Naive thymus-derived CD4-positive, alpha-beta T cell (primary cell): ENCODE measurements at regions of chr1 and their contacts with region 1.

Region 1: DNA sequence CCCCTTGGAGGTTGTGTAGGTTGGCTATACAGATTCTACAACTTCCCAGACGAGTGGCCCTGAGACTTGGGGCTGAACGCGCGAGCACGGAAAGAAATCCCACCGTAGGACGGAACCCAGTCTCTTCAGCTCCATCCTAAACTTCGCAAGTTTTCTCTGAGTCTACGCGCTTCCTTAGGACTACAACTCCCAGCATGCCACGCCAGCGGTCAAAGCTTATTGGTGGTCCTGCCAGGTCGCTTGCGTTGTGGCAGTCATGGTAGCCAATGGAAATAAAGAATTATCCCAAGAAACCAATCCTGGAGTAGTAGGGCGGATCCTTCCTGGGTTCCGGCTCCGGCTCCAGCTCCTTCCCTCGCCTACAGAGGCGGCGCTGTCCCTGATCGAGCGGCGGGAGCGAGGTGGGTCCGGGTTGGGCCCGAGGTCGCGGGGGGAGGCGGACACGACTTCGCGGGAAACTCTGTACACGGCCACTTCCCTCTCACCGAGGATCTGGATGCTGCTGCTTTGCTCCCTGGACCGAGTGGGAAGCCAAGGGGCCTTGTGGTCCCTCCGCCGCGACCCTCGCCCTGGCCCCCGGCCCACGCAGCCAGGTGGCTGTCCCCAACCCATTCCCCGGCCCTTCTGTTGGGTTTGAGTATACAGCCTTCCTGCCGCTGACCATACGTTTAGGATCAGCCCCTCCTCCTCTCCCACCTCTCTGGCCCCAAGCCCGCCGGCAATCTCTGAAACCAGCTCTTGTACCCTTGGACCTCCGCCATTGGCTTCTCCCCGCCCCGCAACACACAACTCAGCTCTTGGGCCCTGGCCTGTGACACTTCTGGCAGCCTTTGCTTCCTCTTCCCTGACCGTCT is at the start of gene ZNF691:
- DNase-seq: peak; percentile 51 to 91 (median 84)
- ATAC-seq: peak; percentile 99
- H3K4me3 ChIP-seq: peak within 1 kb of the TSS; percentile 97
- H3K4me3 Mint-ChIP-seq: peak within 1 kb of the TSS; percentile 84 to 100 (median 96)
- H3K27ac ChIP-seq: peak within 1 kb of the TSS; percentile 72
- H3K27ac Mint-ChIP-seq: peak within 1 kb of the TSS; percentile 71 to 95 (median 85)
- H3K4me1 ChIP-seq: peaks cover 11 to 22% of the 10 kb centered on the region in 2 donors
- H3K4me1 Mint-ChIP-seq: peaks cover 19 to 38% (median 31%) of the 10 kb centered on the region in 7 donors
- H3K27me3 ChIP-seq: no peaks in the 10 kb centered on the region
- H3K27me3 Mint-ChIP-seq: no peaks in the 10 kb centered on the region
- total RNA-seq, gene ZNF691: 3.5 to 17.2 (median 12.8) TPM

Region 2: DNA sequence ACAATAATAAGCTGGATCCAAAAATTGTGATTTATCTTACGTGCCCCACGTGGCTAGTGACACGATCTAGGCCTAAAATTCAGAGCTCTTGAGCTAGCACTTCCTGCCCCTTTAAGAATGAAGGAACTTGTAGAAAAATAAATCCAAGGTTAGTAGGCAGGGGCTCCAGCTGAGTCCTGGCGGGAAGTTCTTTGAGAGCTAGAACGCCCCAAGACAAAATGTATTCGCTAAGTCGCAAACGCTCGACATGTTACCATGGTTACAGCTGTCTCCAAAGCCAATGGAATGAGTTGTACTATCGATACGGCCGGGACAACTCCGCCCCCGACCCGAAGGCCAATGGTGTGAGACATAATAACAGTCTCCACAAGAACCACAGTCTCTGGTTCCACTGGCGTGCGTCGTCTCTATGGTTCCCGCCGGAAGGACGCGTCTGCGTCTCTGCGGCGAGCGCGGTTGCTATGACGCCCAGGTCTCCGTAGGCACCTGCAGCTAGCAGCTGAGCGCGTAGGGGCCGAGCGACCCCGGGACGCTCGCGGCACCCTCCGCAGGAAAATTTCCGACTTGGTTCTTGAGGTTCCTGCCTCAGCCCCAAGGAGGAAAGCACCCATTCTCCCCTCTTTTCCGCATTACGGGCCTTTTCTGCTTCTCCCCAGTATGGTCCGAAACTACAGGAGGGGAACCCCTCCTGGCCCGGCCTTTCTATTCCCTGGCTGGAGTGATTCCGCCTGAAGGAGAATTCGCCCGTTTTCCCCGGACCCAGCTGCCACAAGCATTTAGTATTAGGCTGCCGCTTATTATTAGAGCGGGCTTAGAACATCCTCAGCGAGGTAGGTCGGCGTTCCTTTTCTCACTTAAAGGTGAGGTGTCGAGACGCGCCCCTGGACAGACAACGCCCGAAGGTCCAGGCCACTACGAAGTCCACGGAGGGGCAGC is 383.4 kb before region 1 on chr1 and contains the start of gene CCDC30:
- CTCF ChIA-PET with region 1: no interaction called
- POLR2A ChIA-PET with region 1: no interaction called
- intact Hi-C with region 1: loop called (anchors 1 to 5 kb)
- DNase-seq: peak; percentile 75 to 99 (median 98)
- ATAC-seq: peak; percentile 99
- H3K4me3 ChIP-seq: peak within 1 kb of the TSS; percentile 50
- H3K4me3 Mint-ChIP-seq: peak within 1 kb of the TSS; percentile 74 to 92 (median 86)
- H3K27ac ChIP-seq: peak within 1 kb of the TSS; percentile 86
- H3K27ac Mint-ChIP-seq: peak within 1 kb of the TSS; percentile 87 to 98 (median 93)
- H3K4me1 ChIP-seq: peaks cover 14 to 18% of the 10 kb centered on the region in 2 donors
- H3K4me1 Mint-ChIP-seq: peaks cover 14 to 57% (median 49%) of the 10 kb centered on the region in 7 donors
- H3K27me3 ChIP-seq: no peaks in the 10 kb centered on the region
- H3K27me3 Mint-ChIP-seq: peaks cover 0 to 20% (median 0%) of the 10 kb centered on the region in 5 donors
- total RNA-seq, gene CCDC30: 2.3 to 5.3 (median 4.2) TPM

Region 3: DNA sequence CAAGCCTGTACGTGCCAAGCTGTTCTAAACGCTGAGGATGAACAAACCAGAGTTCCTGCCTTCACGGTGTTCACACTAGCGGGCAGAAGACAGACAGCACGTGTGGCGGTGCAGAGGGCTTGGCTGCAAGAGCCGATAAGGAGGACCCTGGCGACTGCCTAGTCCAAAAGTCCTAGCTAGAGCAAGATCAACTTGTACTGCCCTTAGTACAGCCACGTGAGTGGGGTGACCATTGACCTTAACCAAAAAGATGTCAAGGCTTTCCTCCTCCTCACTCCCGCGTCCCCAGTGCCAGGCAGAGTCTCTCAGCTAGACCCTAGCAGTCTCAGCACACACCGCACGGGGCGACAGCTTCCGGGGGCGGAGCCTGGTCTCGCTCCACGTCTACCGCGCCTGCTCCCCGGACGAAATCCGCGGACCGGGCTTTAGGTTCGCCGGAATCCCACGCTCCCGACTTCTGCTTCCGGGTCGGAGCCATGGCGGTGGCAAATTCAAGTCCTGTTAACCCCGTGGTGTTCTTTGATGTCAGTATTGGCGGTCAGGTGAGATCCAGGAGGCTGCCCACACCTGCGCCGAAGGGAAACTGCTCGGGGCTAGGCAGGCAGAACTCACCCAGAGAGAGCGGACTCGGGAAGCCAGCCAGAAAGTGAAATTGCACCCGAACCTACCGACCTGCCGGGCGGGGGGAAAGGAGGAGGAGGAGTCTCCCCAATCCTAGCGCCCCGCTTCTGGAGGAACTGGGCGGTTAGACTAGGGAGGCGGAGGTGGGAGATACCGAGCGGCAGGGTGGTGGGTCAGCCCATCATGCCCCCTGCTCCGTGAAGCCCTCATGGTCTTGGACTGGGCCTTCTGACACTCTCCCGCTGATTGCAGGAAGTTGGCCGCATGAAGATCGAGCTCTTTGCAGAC is 188.3 kb before region 1 on chr1 and contains the start of gene PPIH:
- CTCF ChIA-PET with region 1: no interaction called
- POLR2A ChIA-PET with region 1: interaction called, 3 read pairs
- intact Hi-C with region 1: loop called (anchors 1 kb)
- DNase-seq: peak; percentile 82 to 94 (median 92)
- ATAC-seq: peak; percentile 99
- H3K4me3 ChIP-seq: peak within 1 kb of the TSS; percentile 90
- H3K4me3 Mint-ChIP-seq: peak within 1 kb of the TSS; percentile 94 to 99 (median 99)
- H3K27ac ChIP-seq: peak within 1 kb of the TSS; percentile 75
- H3K27ac Mint-ChIP-seq: peak within 1 kb of the TSS; percentile 84 to 98 (median 96)
- H3K4me1 ChIP-seq: peaks cover 17 to 22% of the 10 kb centered on the region in 2 donors
- H3K4me1 Mint-ChIP-seq: peaks cover 20 to 48% (median 44%) of the 10 kb centered on the region in 7 donors
- H3K27me3 ChIP-seq: no peaks in the 10 kb centered on the region
- H3K27me3 Mint-ChIP-seq: peaks cover 0 to 3% (median 0%) of the 10 kb centered on the region in 5 donors
- total RNA-seq, gene PPIH: 28.0 to 76.8 (median 40.7) TPM

Region 4: DNA sequence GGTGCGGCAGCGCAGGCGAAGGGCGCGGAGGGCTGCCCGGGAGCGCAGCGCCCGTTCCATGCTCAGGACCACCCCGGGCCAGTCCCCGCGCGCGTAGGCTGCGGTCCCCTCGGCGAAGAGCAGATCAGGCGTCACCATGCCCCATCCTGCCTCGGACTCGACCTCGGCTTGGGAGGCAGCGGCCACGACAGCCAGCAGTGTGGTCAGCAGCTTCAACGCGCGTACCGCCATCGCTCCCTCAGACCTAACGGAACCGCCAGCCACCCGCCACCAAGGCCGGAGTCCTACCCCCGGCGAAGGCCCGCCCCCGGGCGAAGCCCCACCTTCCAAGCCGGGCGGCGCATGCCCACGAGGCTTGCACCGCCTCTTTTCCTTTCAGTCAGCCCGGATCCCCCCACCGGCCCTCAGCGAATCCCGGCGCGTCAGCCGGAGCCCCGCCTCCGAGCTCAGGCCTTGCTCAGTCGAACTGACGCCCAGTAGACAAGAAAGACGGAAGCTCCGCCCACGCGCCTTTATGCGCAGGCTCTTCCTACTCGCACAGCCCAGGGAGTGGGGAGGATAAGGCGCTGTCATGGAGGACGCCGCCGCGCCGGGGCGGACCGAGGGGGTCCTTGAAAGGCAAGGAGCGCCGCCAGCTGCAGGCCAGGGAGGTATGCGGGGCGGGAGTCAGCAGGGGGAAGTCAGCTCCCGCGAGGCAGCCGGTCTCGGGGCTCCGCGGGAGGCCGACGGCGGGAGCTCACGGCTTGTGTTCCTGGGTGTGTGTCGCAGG is 79.6 kb before region 1 on chr1 and contains the starts of genes C1orf50 and P3H1:
- CTCF ChIA-PET with region 1: interaction called, 3 read pairs
- POLR2A ChIA-PET with region 1: interaction called, 37 read pairs
- intact Hi-C with region 1: loop called (anchors 1 kb)
- DNase-seq: peak; percentile 98 to 100 (median 100)
- ATAC-seq: peak; percentile 96
- H3K4me3 ChIP-seq: peak within 1 kb of the TSS; percentile 91
- H3K4me3 Mint-ChIP-seq: peak within 1 kb of the TSS in 1 of 10 donors; percentile 92
- H3K27ac ChIP-seq: peak within 1 kb of the TSS; percentile 84
- H3K27ac Mint-ChIP-seq: peak within 1 kb of the TSS in 8 of 9 donors; percentile 70 to 96 (median 92)
- H3K4me1 ChIP-seq: peaks cover 25 to 35% of the 10 kb centered on the region in 2 donors
- H3K4me1 Mint-ChIP-seq: peaks cover 20 to 50% (median 32%) of the 10 kb centered on the region in 7 donors
- H3K27me3 ChIP-seq: no peaks in the 10 kb centered on the region
- H3K27me3 Mint-ChIP-seq: no peaks in the 10 kb centered on the region
- total RNA-seq, gene C1orf50: 7.0 to 20.8 (median 18.1) TPM
- total RNA-seq, gene P3H1: 32.5 to 61.8 (median 47.3) TPM

Region 5: DNA sequence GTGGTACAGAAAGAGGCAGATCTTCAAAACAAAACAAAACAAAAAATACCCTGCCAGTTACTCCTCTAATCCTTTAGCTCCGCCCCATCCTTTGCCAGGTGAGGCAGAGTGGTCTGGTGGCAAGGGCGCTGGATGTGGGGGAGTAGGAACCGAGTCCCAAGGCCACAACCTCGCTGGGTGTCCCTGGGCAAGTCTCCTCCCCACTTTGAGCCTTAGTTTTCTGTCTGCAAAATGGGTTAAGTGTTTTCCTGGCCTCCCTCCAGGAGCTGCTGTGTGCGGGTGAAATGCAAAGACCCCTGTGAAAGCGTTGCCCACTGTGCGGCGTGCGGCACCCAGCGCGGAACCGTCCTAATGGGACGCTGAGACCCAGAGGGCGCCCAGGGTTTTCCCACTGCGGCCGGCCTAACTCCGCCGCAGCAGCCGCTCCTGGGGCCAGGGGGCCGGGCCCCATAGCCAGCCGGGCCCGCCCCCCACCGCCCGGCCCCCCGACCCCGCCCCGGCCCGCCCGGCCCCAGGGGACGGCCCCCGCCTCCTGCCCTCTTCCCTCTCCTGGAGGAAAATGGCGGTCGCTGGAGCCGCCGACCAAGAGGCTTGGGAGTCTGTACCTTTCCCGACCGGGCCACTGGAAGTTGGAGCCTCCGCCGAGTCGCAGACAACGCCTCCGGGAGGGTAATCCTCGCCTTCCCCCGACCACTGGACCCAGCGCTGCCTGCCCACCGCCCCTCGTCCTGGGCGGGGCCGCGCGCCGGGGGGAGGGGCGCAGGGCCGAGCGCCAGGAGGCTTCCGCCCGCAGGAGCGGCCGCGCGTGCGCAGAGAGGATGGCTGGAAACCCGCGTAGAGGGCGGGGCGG is 29.7 kb before region 1 on chr1 and contains the starts of genes ERMAP and SVBP:
- CTCF ChIA-PET with region 1: interaction called, 4 read pairs
- POLR2A ChIA-PET with region 1: interaction called, 32 read pairs
- intact Hi-C with region 1: loop called (anchors 1 kb)
- DNase-seq: peak; percentile 86 to 98 (median 91)
- ATAC-seq: peak; percentile 97
- H3K4me3 ChIP-seq: peak within 1 kb of the TSS; percentile 69
- H3K4me3 Mint-ChIP-seq: peak within 1 kb of the TSS; percentile 76 to 90 (median 84)
- H3K27ac ChIP-seq: peak within 1 kb of the TSS; percentile 89
- H3K27ac Mint-ChIP-seq: peak within 1 kb of the TSS; percentile 64 to 94 (median 86)
- H3K4me1 ChIP-seq: peaks cover 6 to 10% of the 10 kb centered on the region in 2 donors
- H3K4me1 Mint-ChIP-seq: peaks cover 19 to 35% (median 29%) of the 10 kb centered on the region in 7 donors
- H3K27me3 ChIP-seq: no peaks in the 10 kb centered on the region
- H3K27me3 Mint-ChIP-seq: peaks cover 0 to 10% (median 0%) of the 10 kb centered on the region in 5 donors
- total RNA-seq, gene ERMAP: 6.1 to 10.3 (median 6.7) TPM
- total RNA-seq, gene SVBP: 12.7 to 22.2 (median 17.8) TPM

Region 6: GRCh38 chr1:42904434-42904833 is 58.0 kb after region 1 on chr1:
- CTCF ChIA-PET with region 1: no interaction called
- POLR2A ChIA-PET with region 1: no interaction called
- intact Hi-C with region 1: no loop called
- DNase-seq: no peak
- ATAC-seq: no peak
- H3K4me3 ChIP-seq: no peak overlapping the region
- H3K4me3 Mint-ChIP-seq: no peak overlapping the region
- H3K27ac ChIP-seq: no peak overlapping the region
- H3K27ac Mint-ChIP-seq: no peak overlapping the region
- H3K4me1 ChIP-seq: no peaks in the 10 kb centered on the region
- H3K4me1 Mint-ChIP-seq: no peaks in the 10 kb centered on the region
- H3K27me3 ChIP-seq: no peaks in the 10 kb centered on the region
- H3K27me3 Mint-ChIP-seq: peaks cover 0 to 7% (median 2%) of the 10 kb centered on the region in 5 donors

Region 7: GRCh38 chr1:43367904-43368645 is 521.6 kb after region 1 on chr1 and contains the start of gene ELOVL1:
- CTCF ChIA-PET with region 1: no interaction called
- POLR2A ChIA-PET with region 1: no interaction called
- intact Hi-C with region 1: loop called in 1 of 2 experiments (anchors 10 kb)
- DNase-seq: peak; percentile 40 to 94 (median 58)
- ATAC-seq: peak; percentile 91
- H3K4me3 ChIP-seq: peak within 1 kb of the TSS; percentile 89
- H3K4me3 Mint-ChIP-seq: peak within 1 kb of the TSS; percentile 86 to 97 (median 92)
- H3K27ac ChIP-seq: peak within 1 kb of the TSS; percentile 90
- H3K27ac Mint-ChIP-seq: peak within 1 kb of the TSS; percentile 88 to 95 (median 91)
- H3K4me1 ChIP-seq: peaks cover 13 to 22% of the 10 kb centered on the region in 2 donors
- H3K4me1 Mint-ChIP-seq: peaks cover 24 to 47% (median 42%) of the 10 kb centered on the region in 7 donors
- H3K27me3 ChIP-seq: no peaks in the 10 kb centered on the region
- H3K27me3 Mint-ChIP-seq: no peaks in the 10 kb centered on the region
- total RNA-seq, gene ELOVL1: 25.9 to 65.3 (median 32.3) TPM

Region 8: DNA sequence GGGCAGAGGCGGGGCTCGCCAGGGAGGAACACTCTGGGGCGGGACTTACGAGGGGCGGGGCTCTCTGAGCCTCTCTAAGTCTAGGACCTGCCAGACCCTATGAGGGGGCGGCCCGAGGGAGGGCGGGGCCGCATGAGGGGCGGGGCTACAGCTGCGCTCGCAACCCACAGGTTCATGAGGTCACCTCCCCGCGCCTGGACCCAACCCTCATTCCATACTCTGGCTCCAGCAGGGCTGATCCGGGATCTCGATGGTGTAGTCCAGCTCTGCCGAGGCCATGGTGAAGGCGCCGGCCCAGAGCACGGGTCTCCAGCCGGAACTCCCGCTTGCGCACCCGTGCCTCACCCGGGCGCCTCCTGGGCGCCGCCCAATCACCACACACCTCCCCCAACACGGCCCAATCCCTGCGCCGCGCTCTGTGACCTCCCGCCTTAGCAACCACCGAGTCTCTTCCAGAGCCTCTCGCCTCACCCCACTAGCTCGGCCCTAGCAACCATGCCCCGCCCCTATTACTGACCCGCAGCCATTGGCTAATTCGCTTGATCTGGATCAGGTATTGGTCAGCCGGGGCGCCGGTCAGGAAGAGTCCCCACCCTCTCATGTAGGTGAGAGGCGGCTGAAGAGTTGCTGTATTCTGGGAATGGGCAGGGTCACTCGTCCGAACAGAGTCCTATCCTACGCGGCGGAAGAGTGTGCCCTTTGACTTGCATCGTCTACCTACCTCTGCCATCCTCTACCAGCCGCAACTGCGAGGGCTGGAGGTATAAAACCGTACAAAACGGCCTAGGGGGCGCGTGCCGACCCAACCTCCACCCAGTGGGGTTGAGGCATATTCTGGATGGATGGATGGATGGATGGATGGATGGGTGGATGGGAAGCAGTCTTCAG is 1827.9 kb after region 1 on chr1 and contains the starts of genes ARMH1 and TMEM53:
- CTCF ChIA-PET with region 1: no interaction called
- POLR2A ChIA-PET with region 1: no interaction called
- intact Hi-C with region 1: no loop called
- DNase-seq: peak; percentile 91 to 96 (median 95)
- ATAC-seq: peak; percentile 94
- H3K4me3 ChIP-seq: peak within 1 kb of the TSS; percentile 81
- H3K4me3 Mint-ChIP-seq: peak within 1 kb of the TSS; percentile 83 to 94 (median 91)
- H3K27ac ChIP-seq: peak within 1 kb of the TSS; percentile 76
- H3K27ac Mint-ChIP-seq: peak within 1 kb of the TSS; percentile 84 to 94 (median 91)
- H3K4me1 ChIP-seq: peaks cover 0 to 6% of the 10 kb centered on the region in 2 donors
- H3K4me1 Mint-ChIP-seq: peaks cover 13 to 34% (median 23%) of the 10 kb centered on the region in 7 donors
- H3K27me3 ChIP-seq: no peaks in the 10 kb centered on the region
- H3K27me3 Mint-ChIP-seq: no peaks in the 10 kb centered on the region
- total RNA-seq, gene ARMH1: 65.8 to 205 (median 87.0) TPM
- total RNA-seq, gene TMEM53: 1.6 to 3.5 (median 1.9) TPM